CD8-positive, alpha-beta T cell (primary cell): ENCODE measurements at regions of chr9 and their contacts with region 1.

Region 1: GRCh38 chr9:35732122-35732799 is at the starts of genes CREB3 and TLN1:
- DNase-seq: peak; percentile 92 to 98 (median 96)
- ATAC-seq: peak; percentile 91
- H3K4me3 ChIP-seq: peak within 1 kb of the TSS; percentile 91 to 99
- H3K4me3 Mint-ChIP-seq: peak within 1 kb of the TSS; percentile 93
- H3K27ac ChIP-seq: peak within 1 kb of the TSS; percentile 84 to 96
- H3K27ac Mint-ChIP-seq: peak within 1 kb of the TSS; percentile 88
- H3K4me1 ChIP-seq: peaks cover 62% of the 10 kb centered on the region
- H3K4me1 Mint-ChIP-seq: peaks cover 24% of the 10 kb centered on the region
- H3K27me3 ChIP-seq: no peaks in the 10 kb centered on the region
- H3K27me3 Mint-ChIP-seq: no peaks in the 10 kb centered on the region
- CTCF ChIP-seq: no peak
- total RNA-seq, gene CREB3: 13.1 to 14.2 TPM
- total RNA-seq, gene TLN1: 128 to 129 TPM

Region 2: GRCh38 chr9:34048923-34049697 is 1683.2 kb before region 1 on chr9:
- CTCF ChIA-PET with region 1: no interaction called
- POLR2A ChIA-PET with region 1: no interaction called
- intact Hi-C with region 1: loop called (anchors 5 kb)
- DNase-seq: peak; percentile 92 to 99 (median 97)
- ATAC-seq: peak; percentile 81
- H3K4me3 ChIP-seq: peak overlapping the region; percentile 76 to 79
- H3K4me3 Mint-ChIP-seq: peak overlapping the region; percentile 97
- H3K27ac ChIP-seq: peak overlapping the region; percentile 87 to 95
- H3K27ac Mint-ChIP-seq: peak overlapping the region; percentile 100
- H3K4me1 ChIP-seq: peaks cover 23% of the 10 kb centered on the region
- H3K4me1 Mint-ChIP-seq: peaks cover 29% of the 10 kb centered on the region
- H3K27me3 ChIP-seq: no peaks in the 10 kb centered on the region
- H3K27me3 Mint-ChIP-seq: no peaks in the 10 kb centered on the region
- CTCF ChIP-seq: no peak

Region 3: GRCh38 chr9:34723141-34723540 is 1009.1 kb before region 1 on chr9:
- CTCF ChIA-PET with region 1: no interaction called
- POLR2A ChIA-PET with region 1: no interaction called
- intact Hi-C with region 1: no loop called
- DNase-seq: no peak
- ATAC-seq: no peak
- H3K4me3 ChIP-seq: no peak overlapping the region
- H3K4me3 Mint-ChIP-seq: no peak overlapping the region
- H3K27ac ChIP-seq: no peak overlapping the region
- H3K27ac Mint-ChIP-seq: no peak overlapping the region
- H3K4me1 ChIP-seq: no peaks in the 10 kb centered on the region
- H3K4me1 Mint-ChIP-seq: no peaks in the 10 kb centered on the region
- H3K27me3 ChIP-seq: no peaks in the 10 kb centered on the region
- H3K27me3 Mint-ChIP-seq: peaks cover 7% of the 10 kb centered on the region
- CTCF ChIP-seq: no peak

Region 4: DNA sequence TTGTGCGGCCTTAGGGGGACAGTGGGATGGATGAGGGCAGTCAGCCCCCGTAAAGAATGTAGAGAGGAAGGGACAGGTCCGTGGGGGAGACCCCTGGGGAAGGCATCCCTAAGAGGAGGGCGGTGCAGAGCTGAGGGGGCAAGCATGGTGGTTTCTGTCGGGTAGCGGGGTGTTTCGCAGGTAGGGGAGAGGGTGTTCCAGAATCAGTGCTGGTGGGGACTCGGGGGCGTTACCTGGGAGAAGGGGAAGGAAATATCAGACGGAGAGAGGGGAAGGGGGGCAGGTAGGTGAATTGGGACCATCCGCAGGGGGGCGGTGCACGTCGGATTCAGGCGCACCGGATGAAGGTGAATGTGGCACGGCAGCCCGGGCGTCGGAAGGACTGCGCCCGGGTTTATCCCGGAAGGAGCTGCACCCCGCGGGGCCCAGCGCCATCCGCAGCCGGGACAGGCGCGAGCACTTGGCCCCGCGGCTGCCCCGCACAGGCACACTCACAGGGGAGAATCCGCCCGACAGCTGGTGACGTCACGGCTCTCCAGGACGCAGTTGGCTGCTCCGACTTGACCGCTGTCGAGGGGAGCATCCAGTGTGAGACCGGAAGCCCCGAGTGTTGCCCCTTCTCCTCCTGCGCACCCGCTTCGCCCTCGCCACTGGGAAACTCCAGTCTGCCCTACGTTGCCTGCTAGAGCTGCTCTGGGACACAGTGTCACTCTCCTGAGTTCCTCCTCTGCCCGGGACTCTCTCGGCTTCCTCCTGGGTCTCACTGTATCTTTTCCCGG is 115.4 kb before region 1 on chr9:
- CTCF ChIA-PET with region 1: interaction called, 8 read pairs
- POLR2A ChIA-PET with region 1: interaction called, 14 read pairs
- intact Hi-C with region 1: loop called in 1 of 2 experiments (anchors 1 kb)
- DNase-seq: peak; percentile 22 to 92 (median 73)
- ATAC-seq: peak; percentile 74
- H3K4me3 ChIP-seq: peak overlapping the region; percentile 44 to 60
- H3K4me3 Mint-ChIP-seq: peak overlapping the region; percentile 85
- H3K27ac ChIP-seq: peak overlapping the region; percentile 36 to 93
- H3K27ac Mint-ChIP-seq: peak overlapping the region; percentile 92
- H3K4me1 ChIP-seq: peaks cover 34% of the 10 kb centered on the region
- H3K4me1 Mint-ChIP-seq: peaks cover 39% of the 10 kb centered on the region
- H3K27me3 ChIP-seq: no peaks in the 10 kb centered on the region
- H3K27me3 Mint-ChIP-seq: no peaks in the 10 kb centered on the region
- CTCF ChIP-seq: peak; percentile 22

Region 5: DNA sequence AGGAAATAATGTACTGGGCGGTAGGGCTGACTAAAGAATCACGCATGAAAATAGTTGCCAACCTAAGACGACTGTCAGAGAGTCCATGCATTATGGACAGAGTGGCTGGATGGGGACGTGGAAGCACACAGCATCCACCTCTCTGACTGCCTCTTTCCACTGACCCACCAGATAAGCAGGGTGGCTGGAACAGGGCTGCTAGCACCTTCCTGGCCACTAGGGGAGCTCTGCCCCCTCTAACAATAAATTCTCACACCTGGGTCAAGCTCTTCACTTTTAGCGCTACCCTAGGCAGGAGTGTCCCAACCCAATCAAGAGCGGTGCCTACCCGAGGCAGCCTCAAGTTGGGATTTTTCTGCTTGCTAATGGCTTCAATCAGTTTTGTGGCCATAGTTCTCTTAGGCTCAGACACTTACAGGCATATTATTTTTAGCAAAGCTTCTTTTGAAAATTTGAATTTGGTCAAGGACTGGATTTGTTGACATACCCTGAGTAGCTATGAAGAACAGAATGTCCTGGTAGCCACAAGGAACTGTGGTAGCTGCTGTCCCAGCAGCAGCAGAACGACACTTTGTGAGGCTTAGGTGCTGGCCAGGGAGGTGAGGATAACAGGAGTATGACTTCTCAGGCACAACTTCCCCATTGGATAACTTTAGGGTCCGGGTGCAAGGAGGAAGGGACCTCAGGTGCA is 35.6 kb before region 1 on chr9:
- CTCF ChIA-PET with region 1: interaction called, 70 read pairs
- POLR2A ChIA-PET with region 1: interaction called, 11 read pairs
- intact Hi-C with region 1: loop called in 1 of 2 experiments (anchors 2 kb)
- DNase-seq: peak; percentile 34 to 78 (median 60)
- ATAC-seq: peak; percentile 97
- H3K4me3 ChIP-seq: no peak overlapping the region
- H3K4me3 Mint-ChIP-seq: no peak overlapping the region
- H3K27ac ChIP-seq: peak overlapping the region in 1 of 2 experiments; percentile 22
- H3K27ac Mint-ChIP-seq: peak overlapping the region; percentile 62
- H3K4me1 ChIP-seq: no peaks in the 10 kb centered on the region
- H3K4me1 Mint-ChIP-seq: peaks cover 6% of the 10 kb centered on the region
- H3K27me3 ChIP-seq: no peaks in the 10 kb centered on the region
- H3K27me3 Mint-ChIP-seq: no peaks in the 10 kb centered on the region
- CTCF ChIP-seq: peak; percentile 83

Region 6: GRCh38 chr9:35756275-35757225 is 24.3 kb after region 1 on chr9:
- CTCF ChIA-PET with region 1: interaction called, 13 read pairs
- POLR2A ChIA-PET with region 1: interaction called, 11 read pairs
- intact Hi-C with region 1: loop called in 1 of 2 experiments (anchors 1 kb)
- DNase-seq: peak; percentile 49 to 87 (median 80)
- ATAC-seq: peak; percentile 97
- H3K4me3 ChIP-seq: peak overlapping the region; percentile 75 to 98
- H3K4me3 Mint-ChIP-seq: peak overlapping the region; percentile 91
- H3K27ac ChIP-seq: peak overlapping the region; percentile 72 to 83
- H3K27ac Mint-ChIP-seq: peak overlapping the region; percentile 91
- H3K4me1 ChIP-seq: peaks cover 18% of the 10 kb centered on the region
- H3K4me1 Mint-ChIP-seq: peaks cover 52% of the 10 kb centered on the region
- H3K27me3 ChIP-seq: no peaks in the 10 kb centered on the region
- H3K27me3 Mint-ChIP-seq: no peaks in the 10 kb centered on the region
- CTCF ChIP-seq: peak; percentile 67

Region 7: GRCh38 chr9:35882263-35882848 is 150.1 kb after region 1 on chr9:
- CTCF ChIA-PET with region 1: interaction called, 6 read pairs
- POLR2A ChIA-PET with region 1: no interaction called
- intact Hi-C with region 1: loop called (anchors 1 kb)
- DNase-seq: peak; percentile 49 to 88 (median 80)
- ATAC-seq: peak; percentile 88
- H3K4me3 ChIP-seq: no peak overlapping the region
- H3K4me3 Mint-ChIP-seq: no peak overlapping the region
- H3K27ac ChIP-seq: no peak overlapping the region
- H3K27ac Mint-ChIP-seq: no peak overlapping the region
- H3K4me1 ChIP-seq: no peaks in the 10 kb centered on the region
- H3K4me1 Mint-ChIP-seq: no peaks in the 10 kb centered on the region
- H3K27me3 ChIP-seq: no peaks in the 10 kb centered on the region
- H3K27me3 Mint-ChIP-seq: peaks cover 4% of the 10 kb centered on the region
- CTCF ChIP-seq: peak; percentile 96

Region 8: GRCh38 chr9:36765468-36766341 is 1033.4 kb after region 1 on chr9:
- CTCF ChIA-PET with region 1: no interaction called
- POLR2A ChIA-PET with region 1: no interaction called
- intact Hi-C with region 1: loop called in 1 of 2 experiments (anchors 5 kb)
- DNase-seq: peak; percentile 68 to 95 (median 89)
- ATAC-seq: peak; percentile 99
- H3K4me3 ChIP-seq: peak overlapping the region; percentile 47 to 54
- H3K4me3 Mint-ChIP-seq: no peak overlapping the region
- H3K27ac ChIP-seq: peak overlapping the region; percentile 23 to 39
- H3K27ac Mint-ChIP-seq: peak overlapping the region; percentile 71
- H3K4me1 ChIP-seq: peaks cover 6% of the 10 kb centered on the region
- H3K4me1 Mint-ChIP-seq: peaks cover 6% of the 10 kb centered on the region
- H3K27me3 ChIP-seq: peaks cover 0 to 7% of the 10 kb centered on the region in 2 experiments
- H3K27me3 Mint-ChIP-seq: peaks cover 5% of the 10 kb centered on the region
- CTCF ChIP-seq: no peak